ENCODE measurements at regions of chr6 and their contacts with region 1.

Region 1: DNA sequence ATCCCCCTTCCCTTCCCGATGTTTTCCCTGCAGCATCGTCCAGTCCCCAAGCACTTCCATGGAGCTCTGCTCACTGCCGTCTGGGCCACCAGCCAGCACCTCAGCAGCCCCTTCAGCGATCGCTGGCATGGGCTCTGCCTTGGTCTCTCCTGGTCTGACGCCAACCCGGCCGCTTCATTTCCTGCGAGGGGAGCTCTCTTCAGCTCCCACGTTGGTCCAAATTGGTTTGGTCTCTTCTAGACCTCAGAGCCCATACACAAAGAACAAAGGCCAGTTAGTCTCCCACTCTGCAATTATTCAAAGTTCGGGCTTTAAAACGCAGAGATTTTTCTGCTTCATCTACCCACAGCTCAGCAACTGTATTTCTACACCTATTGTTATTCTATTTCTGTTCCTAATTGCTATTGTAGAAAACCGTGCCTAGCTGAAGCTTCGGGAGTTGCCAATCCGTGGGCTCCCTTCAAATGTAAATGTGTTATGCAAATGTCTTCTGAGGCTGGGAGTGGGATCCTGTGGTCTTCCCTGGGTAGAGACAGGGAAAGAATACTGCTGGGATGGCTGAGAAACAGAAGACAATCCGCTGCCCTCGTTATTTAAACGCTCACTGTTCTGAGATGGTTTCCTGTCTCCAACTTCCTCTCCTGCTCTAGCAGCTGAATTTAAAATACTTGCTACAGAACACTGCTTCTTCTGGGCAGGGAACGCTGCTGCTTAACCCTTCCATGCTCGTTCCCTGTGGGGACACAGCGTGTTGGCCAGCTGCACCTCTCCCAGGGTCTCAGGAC is 154.2 kb upstream of the QKI start:
- DNase-seq: peak in 40 of 42 donors; percentile 53 to 88 (median 75)

Region 2: GRCh38 chr6:163309491-163310026 is 49.3 kb after region 1 on chr6:
- intact Hi-C with region 1: loop called (anchors 10 kb)
- DNase-seq: peak in 3 of 42 donors; percentile 15 to 41 (median 32)

Region 3: DNA sequence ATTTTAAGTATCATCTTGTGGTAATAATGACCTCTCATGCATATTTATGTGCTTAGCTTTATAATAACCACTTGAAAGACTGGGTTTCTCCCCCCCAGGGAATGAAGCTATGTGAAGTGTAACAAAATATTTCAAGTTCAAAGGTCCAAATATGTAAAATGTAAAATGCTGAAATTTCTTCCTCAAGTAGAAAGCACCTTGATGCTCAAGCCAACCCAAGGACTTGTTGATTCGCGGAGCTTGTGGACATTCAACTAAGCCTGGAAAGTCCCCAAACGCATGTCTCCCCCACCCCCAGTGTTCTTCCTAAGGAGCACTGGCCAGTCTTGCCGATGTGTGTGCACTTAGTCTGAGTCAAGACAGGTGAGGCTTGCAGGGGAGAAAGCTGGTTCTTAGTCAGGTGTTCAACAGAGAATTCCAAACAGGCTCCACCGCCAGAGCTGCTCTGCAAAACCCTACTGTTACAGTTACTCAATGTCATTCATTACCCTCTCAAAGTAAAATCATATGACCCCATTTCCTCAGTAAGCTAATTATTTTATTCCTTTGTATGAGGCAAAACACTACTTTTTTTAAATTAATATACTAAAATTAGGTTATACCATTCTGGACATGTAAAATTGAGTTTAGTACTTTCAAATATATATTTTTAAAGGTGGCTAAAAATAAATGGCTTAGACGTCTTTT is 107.3 kb after region 1 on chr6:
- intact Hi-C with region 1: no loop called
- DNase-seq: no peak

Measured in head of caudate nucleus (tissue), 42 donors.